Activated naive CD4-positive, alpha-beta T cell treated with anti-CD3 and anti-CD28 coated beads for 36 hours (primary cell): ENCODE measurements at regions of chrX and their contacts with region 1.

Region 1: DNA sequence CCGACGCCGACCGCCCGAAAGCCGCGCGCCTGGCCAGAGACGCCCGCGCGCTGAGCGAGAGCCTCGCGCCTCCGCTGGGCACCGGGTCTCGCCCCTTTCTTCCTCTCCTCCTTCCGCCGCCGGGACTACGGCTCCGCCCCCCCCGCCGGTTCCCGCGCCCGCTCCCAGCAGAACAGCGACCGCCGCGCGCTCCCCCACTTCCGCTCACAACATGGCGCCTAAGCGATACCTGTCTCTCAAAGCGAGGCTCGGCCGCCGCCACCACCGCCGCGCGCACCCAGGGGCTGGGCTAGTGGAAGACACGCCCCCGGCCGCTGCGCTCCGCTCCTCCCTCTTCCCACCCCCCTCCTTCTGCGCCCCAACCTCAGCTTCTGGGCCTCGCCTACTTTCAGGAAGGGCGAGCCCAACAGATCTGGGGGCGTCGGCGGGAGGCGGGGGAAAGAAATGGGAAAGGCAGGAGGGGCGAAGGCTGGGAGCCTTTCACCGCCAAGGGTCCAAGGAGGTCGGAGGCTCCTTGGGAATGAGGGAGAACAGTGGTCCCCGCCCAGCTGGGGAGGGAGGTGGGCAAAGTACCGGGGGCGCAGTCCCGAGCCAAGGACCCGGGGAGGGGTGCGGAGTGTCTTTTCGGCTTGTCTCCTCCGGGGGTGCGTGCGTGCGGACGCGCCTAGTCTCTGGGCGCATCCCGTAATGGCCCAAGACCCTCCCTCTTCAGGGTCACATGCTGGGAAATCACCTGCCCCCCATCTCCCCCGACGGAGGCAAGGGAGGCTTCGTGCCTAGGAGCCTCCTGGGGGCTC is at the start of gene RPS6KA3:
- DNase-seq: peak; percentile 91
- H3K4me3 Mint-ChIP-seq: peak within 1 kb of the TSS; percentile 84
- H3K27ac Mint-ChIP-seq: peak within 1 kb of the TSS; percentile 91
- H3K4me1 Mint-ChIP-seq: peaks cover 21% of the 10 kb centered on the region
- H3K27me3 Mint-ChIP-seq: no peaks in the 10 kb centered on the region
- total RNA-seq, gene RPS6KA3: 27.7 to 27.9 TPM

Region 2: GRCh38 chrX:19799319-19800182 is 467.5 kb before region 1 on chrX:
- CTCF ChIA-PET with region 1: no interaction called
- intact Hi-C with region 1: loop called (anchors 5 kb)
- DNase-seq: peak; percentile 68
- H3K4me3 Mint-ChIP-seq: peak overlapping the region; percentile 88
- H3K27ac Mint-ChIP-seq: peak overlapping the region; percentile 99
- H3K4me1 Mint-ChIP-seq: peaks cover 65% of the 10 kb centered on the region
- H3K27me3 Mint-ChIP-seq: no peaks in the 10 kb centered on the region

Region 3: DNA sequence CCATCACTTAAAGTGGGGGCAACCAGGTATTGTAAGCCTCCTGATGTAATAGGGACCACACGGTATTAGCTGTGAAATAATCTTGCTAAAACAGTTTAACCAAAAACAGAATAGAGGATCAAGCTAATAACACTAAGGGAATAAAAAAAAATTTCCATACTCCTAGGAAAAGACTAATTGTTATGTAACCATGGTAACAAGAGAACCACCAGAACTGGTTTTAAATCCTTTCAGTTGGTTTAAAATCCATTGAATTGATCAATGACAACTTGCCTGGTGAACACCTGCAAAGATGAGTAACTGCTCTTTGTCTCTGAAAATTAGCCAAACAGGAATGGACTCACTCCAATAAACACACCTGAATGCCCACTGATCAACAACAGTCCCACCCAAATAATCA is 86.8 kb before region 1 on chrX:
- CTCF ChIA-PET with region 1: no interaction called
- intact Hi-C with region 1: no loop called
- DNase-seq: no peak
- H3K4me3 Mint-ChIP-seq: no peak overlapping the region
- H3K27ac Mint-ChIP-seq: no peak overlapping the region
- H3K4me1 Mint-ChIP-seq: peaks cover 11% of the 10 kb centered on the region
- H3K27me3 Mint-ChIP-seq: no peaks in the 10 kb centered on the region

Region 4: GRCh38 chrX:20224814-20225487 is 42.1 kb before region 1 on chrX:
- CTCF ChIA-PET with region 1: no interaction called
- intact Hi-C with region 1: loop called (anchors 2 kb)
- DNase-seq: no peak
- H3K4me3 Mint-ChIP-seq: no peak overlapping the region
- H3K27ac Mint-ChIP-seq: no peak overlapping the region
- H3K4me1 Mint-ChIP-seq: peaks cover 37% of the 10 kb centered on the region
- H3K27me3 Mint-ChIP-seq: no peaks in the 10 kb centered on the region

Region 5: GRCh38 chrX:20333672-20334071 is 66.7 kb after region 1 on chrX:
- CTCF ChIA-PET with region 1: no interaction called
- intact Hi-C with region 1: loop called (anchors 1 kb)
- DNase-seq: peak; percentile 63
- H3K4me3 Mint-ChIP-seq: no peak overlapping the region
- H3K27ac Mint-ChIP-seq: no peak overlapping the region
- H3K4me1 Mint-ChIP-seq: peaks cover 24% of the 10 kb centered on the region
- H3K27me3 Mint-ChIP-seq: no peaks in the 10 kb centered on the region

Region 6: DNA sequence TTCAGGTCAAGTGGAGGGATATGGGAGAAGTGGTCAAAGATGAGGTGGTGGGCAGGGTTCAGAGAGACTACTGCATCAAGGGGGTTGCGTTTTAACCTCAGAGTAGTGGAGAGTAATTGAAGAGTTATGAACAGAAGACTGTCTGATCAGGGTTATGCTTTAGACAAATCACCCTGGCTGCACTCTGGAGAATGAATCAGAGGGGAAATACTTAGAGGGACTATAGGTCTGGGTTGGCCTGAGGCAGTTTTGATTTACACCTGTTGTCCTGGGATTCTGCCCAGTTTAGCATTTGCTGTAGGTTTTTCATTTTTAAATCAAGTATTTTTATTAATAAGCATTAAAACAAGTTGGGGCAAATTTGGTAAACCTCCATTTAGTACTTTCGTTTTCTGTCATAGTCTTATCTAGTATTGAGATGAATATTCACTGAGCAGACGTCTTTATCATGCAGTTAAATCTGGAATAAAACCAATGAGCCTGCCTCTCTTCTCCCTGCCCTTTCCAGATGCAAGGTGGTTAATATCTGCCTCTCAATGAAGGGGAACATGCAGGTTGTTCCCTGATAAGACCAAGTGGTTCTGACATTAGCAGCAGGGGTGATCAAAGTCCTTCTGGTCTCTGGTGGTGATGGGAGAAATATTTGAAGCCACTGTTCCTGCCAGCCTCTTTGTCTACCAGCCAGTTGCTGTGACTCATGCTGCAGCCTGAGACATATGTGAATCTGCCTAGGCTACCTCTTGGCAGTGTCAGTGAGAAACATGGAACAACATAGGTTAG is 115.7 kb after region 1 on chrX:
- CTCF ChIA-PET with region 1: no interaction called
- intact Hi-C with region 1: loop called (anchors 1 kb)
- DNase-seq: peak; percentile 25
- H3K4me3 Mint-ChIP-seq: no peak overlapping the region
- H3K27ac Mint-ChIP-seq: no peak overlapping the region
- H3K4me1 Mint-ChIP-seq: peaks cover 23% of the 10 kb centered on the region
- H3K27me3 Mint-ChIP-seq: no peaks in the 10 kb centered on the region

Region 7: GRCh38 chrX:21374163-21374993 is 1107.4 kb after region 1 on chrX and contains the start of gene CNKSR2:
- CTCF ChIA-PET with region 1: no interaction called
- intact Hi-C with region 1: loop called (anchors 10 kb)
- DNase-seq: peak; percentile 63
- H3K4me3 Mint-ChIP-seq: peak within 1 kb of the TSS; percentile 92
- H3K27ac Mint-ChIP-seq: peak within 1 kb of the TSS; percentile 61
- H3K4me1 Mint-ChIP-seq: peaks cover 28% of the 10 kb centered on the region
- H3K27me3 Mint-ChIP-seq: no peaks in the 10 kb centered on the region
- total RNA-seq, gene CNKSR2: 6.6 to 8.4 TPM